ENCODE measurements at regions of chr16 and their contacts with region 1.

Region 1: GRCh38 chr16:75614066-75614897 is 8.8 kb downstream of the ADAT1 start:
- H3K4me3 Mint-ChIP-seq: no peak overlapping the region
- H3K27ac Mint-ChIP-seq: no peak overlapping the region
- H3K4me1 Mint-ChIP-seq: no peaks in the 10 kb centered on the region
- H3K27me3 Mint-ChIP-seq: no peaks in the 10 kb centered on the region

Region 2: DNA sequence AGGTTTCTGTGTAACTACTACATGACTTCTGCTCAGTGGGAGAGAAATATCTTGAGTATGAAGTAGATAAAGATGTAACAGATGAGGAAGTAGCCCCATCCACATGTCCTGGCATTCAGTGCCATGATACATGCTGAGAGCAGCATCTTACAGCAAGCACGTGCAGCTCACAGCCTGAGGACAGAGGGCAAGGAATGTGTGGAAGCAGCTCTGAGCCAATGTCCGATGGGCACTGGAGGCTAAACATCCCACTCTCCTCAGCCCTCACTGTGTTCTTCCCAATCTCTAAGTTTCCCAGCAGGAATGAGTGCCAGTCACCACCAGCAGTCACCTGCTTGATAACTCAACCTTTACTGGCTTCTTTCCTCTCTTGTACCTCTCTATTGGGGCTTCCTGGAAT is 221.4 kb before region 1 on chr16:
- intact Hi-C with region 1: no loop called
- H3K4me3 Mint-ChIP-seq: no peak overlapping the region
- H3K27ac Mint-ChIP-seq: no peak overlapping the region
- H3K4me1 Mint-ChIP-seq: no peaks in the 10 kb centered on the region
- H3K27me3 Mint-ChIP-seq: peaks cover 66% of the 10 kb centered on the region

Region 3: DNA sequence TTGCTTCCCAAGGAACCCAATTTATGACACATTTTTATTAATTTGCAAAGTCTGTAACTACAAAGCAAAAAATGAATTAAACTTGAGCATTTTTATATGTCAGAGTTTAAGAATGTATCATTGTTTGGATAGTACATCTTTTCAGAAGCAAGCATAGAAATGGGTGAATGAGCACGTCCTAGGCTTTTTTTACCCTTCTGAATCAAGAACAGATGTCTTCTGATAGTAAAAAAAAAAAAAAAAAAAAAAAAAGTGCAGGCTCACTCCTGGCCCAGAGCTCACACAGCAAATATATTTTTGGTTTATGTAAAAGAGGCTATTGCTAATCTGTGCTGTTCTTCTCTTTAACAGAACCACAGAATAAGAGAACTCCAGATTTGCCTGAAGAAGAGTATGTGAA is 39.6 kb after region 1 on chr16:
- intact Hi-C with region 1: loop called (anchors 5 kb)
- H3K4me3 Mint-ChIP-seq: no peak overlapping the region
- H3K27ac Mint-ChIP-seq: no peak overlapping the region
- H3K4me1 Mint-ChIP-seq: peaks cover 34% of the 10 kb centered on the region
- H3K27me3 Mint-ChIP-seq: no peaks in the 10 kb centered on the region

Region 4: DNA sequence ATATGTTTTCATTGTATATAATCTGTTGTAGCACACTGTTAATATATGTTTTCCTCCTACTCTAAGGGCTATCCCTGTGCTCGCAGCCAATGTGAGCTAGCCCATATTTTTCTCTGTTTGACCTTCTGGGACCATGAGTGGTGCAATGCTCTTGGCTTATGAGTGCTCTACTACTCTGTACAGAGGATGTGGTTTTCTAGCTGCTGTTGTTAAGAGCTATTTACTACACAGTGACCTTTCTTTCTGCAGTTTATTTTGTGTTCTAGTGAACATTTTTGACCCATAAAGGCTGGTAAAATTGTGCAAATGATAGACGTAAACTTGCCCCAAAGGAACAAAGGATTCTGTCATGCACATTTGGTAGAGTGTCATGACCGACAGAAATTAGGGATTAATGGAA is 196.1 kb after region 1 on chr16:
- intact Hi-C with region 1: no loop called
- H3K4me3 Mint-ChIP-seq: no peak overlapping the region
- H3K27ac Mint-ChIP-seq: no peak overlapping the region
- H3K4me1 Mint-ChIP-seq: no peaks in the 10 kb centered on the region
- H3K27me3 Mint-ChIP-seq: no peaks in the 10 kb centered on the region

Measured in dendritic cell treated with granulocyte-macrophage colony-stimulating factor and Interleukin-4, amounts not matched to agents 40 ng/mL and 50 ng/mL, for 4 days (primary cell).